T-cell (primary cell): ENCODE measurements at regions of chr12 and their contacts with region 1.

Region 1: DNA sequence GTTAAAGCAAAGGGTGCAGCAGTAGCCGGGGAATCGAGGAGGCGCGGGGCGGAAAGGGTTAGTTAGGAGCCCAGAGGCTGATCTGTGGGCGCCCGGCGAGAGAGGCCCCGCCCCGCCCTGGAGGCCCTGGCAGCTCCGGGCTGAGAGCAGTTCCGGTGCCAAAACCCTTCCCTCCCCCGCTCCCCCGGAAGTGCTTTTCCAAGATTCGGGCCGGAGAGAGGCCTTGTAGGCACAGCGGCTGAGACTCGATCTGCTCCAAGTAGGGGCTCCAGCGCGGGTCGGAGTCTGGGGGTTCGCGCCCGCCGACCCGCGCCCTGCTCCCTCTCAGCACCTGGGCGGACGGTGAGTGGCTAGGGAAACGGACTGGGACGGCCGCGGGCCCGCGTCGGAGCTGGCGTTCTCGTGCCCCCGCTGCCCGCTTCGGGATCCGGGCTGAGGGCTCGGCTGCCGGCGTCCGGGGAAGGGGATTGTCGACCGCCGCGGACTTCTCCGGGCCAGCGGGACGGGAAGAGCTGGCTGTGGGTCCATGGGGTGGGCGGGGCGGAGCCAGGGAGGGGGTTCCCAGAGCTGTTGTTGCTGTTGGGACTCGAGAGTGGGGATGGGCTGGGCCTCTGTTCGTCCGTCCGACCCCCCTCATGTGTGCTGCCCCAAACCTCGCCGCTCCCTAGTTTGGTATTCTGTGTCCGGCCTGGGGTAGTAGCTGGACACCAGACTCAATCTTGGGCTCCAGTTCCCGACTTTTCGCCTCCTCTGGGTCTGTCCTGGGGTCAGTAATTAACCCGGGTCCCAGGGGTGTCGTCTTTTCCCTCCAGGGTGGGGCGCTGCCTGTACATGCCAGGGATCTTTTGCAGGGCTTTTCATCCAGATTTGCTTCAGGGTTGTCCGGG is at the start of gene FRS2:
- DNase-seq: peak; percentile 67 to 89 (median 82)
- ATAC-seq: peak; percentile 99 to 100 (median 99)
- H3K4me3 ChIP-seq: peak within 1 kb of the TSS; percentile 81 to 88
- H3K4me3 Mint-ChIP-seq: peak within 1 kb of the TSS; percentile 96 to 99 (median 99)
- H3K27ac ChIP-seq: peak within 1 kb of the TSS; percentile 70
- H3K27ac Mint-ChIP-seq: peak within 1 kb of the TSS; percentile 93 to 98
- H3K4me1 ChIP-seq: peaks cover 15 to 25% of the 10 kb centered on the region in 2 experiments
- H3K4me1 Mint-ChIP-seq: peaks cover 50 to 60% (median 52%) of the 10 kb centered on the region in 3 donors
- H3K27me3 ChIP-seq: no peaks in the 10 kb centered on the region
- H3K27me3 Mint-ChIP-seq: no peaks in the 10 kb centered on the region
- total RNA-seq, gene FRS2: 22.0 to 30.2 (median 26.2) TPM

Region 2: DNA sequence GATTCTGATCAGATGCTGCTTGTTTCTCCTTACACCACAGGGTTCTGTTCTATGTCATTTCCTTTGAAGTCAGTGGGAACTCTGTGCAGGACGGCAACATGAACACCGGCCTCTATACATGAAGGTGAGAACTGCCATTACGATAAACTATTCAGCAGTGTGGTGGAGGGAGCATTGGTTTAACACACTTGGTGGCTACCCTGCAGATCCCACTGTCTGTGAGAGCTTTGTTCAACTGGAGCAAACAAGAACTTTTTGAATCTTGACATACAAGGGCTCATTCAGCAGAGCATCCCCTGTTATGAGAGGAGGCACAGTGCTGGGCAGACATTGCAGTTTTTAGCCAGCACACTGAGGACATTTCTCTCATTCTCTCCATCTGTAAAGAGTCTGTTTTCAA is 11.0 kb before region 1 on chr12:
- CTCF ChIA-PET with region 1: no interaction called
- POLR2A ChIA-PET with region 1: no interaction called
- DNase-seq: no peak
- ATAC-seq: no peak
- H3K4me3 ChIP-seq: no peak overlapping the region
- H3K4me3 Mint-ChIP-seq: no peak overlapping the region
- H3K27ac ChIP-seq: no peak overlapping the region
- H3K27ac Mint-ChIP-seq: no peak overlapping the region
- H3K4me1 ChIP-seq: no peaks in the 10 kb centered on the region
- H3K4me1 Mint-ChIP-seq: no peaks in the 10 kb centered on the region
- H3K27me3 ChIP-seq: no peaks in the 10 kb centered on the region
- H3K27me3 Mint-ChIP-seq: peaks cover 4 to 13% of the 10 kb centered on the region in 2 donors

Region 3: GRCh38 chr12:69490920-69491643 is 20.6 kb after region 1 on chr12:
- CTCF ChIA-PET with region 1: interaction called in 1 of 2 experiments, 3 read pairs
- POLR2A ChIA-PET with region 1: interaction called in 1 of 2 experiments, 11 read pairs
- DNase-seq: no peak
- ATAC-seq: no peak
- H3K4me3 ChIP-seq: no peak overlapping the region
- H3K4me3 Mint-ChIP-seq: no peak overlapping the region
- H3K27ac ChIP-seq: no peak overlapping the region
- H3K27ac Mint-ChIP-seq: no peak overlapping the region
- H3K4me1 ChIP-seq: peaks cover 0 to 2% of the 10 kb centered on the region in 2 experiments
- H3K4me1 Mint-ChIP-seq: peaks cover 44 to 48% (median 47%) of the 10 kb centered on the region in 3 donors
- H3K27me3 ChIP-seq: no peaks in the 10 kb centered on the region
- H3K27me3 Mint-ChIP-seq: no peaks in the 10 kb centered on the region